Natural killer cell (primary cell): ENCODE measurements at regions of chr5 and their contacts with region 1.

Region 1: DNA sequence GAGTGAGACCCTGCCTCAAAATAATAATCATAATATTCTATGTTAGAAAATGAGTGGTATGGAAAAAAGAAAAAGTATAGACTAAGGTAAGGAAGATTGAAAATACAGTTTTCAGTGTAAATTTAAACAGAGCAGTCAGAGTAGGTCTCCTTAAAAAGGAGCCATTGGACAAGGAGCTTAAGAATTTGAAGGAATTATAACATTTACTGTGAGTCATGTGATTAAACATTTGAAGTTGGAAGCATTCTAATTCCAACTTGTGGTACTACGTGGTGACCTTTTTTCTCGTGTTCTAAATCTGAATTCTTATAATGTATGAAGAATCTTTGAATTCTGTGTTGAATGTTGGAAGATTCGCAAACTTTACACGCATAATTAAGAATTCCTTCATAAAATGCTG is 39.3 kb upstream of the TMEM171 start:
- DNase-seq: no peak
- ATAC-seq: no peak
- H3K4me3 ChIP-seq: no peak overlapping the region
- H3K4me3 Mint-ChIP-seq: no peak overlapping the region
- H3K27ac ChIP-seq: no peak overlapping the region
- H3K27ac Mint-ChIP-seq: no peak overlapping the region
- H3K4me1 ChIP-seq: no peaks in the 10 kb centered on the region
- H3K4me1 Mint-ChIP-seq: no peaks in the 10 kb centered on the region
- H3K27me3 ChIP-seq: no peaks in the 10 kb centered on the region
- H3K27me3 Mint-ChIP-seq: no peaks in the 10 kb centered on the region
- CTCF ChIP-seq: no peak

Region 2: DNA sequence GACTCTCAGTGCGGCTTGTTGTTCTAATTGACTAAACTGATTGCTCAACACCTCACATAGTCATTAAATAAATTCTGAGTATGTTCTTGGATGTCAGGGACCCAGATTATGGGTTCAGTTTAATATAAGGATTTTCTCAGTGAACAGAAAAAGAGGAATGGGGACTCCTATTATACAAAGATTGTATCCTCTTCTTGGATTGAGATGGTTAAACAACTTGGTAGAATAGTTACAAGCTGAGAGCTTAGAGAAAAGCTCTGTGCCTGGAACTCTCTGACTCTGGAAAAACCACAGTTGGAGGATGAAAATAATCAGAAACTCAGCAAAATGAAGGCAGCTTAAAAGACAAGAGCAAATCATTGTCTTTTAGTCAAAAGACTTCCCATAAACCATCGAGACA is 453.9 kb after region 1 on chr5:
- intact Hi-C with region 1: loop called (anchors 5 kb)
- DNase-seq: no peak
- ATAC-seq: no peak
- H3K4me3 ChIP-seq: no peak overlapping the region
- H3K4me3 Mint-ChIP-seq: no peak overlapping the region
- H3K27ac ChIP-seq: no peak overlapping the region
- H3K27ac Mint-ChIP-seq: no peak overlapping the region
- H3K4me1 ChIP-seq: no peaks in the 10 kb centered on the region
- H3K4me1 Mint-ChIP-seq: no peaks in the 10 kb centered on the region
- H3K27me3 ChIP-seq: no peaks in the 10 kb centered on the region
- H3K27me3 Mint-ChIP-seq: peaks cover 29 to 39% of the 10 kb centered on the region in 2 donors
- CTCF ChIP-seq: no peak